CD4-positive, alpha-beta T cell (primary cell): ENCODE measurements at regions of chrX and their contacts with region 1.

Region 1: GRCh38 chrX:119943185-119943988 is at the start of gene NKAP:
- DNase-seq: peak; percentile 64 to 91 (median 72)
- ATAC-seq: peak; percentile 84
- H3K4me3 ChIP-seq: peak within 1 kb of the TSS; percentile 95
- H3K4me3 Mint-ChIP-seq: peak within 1 kb of the TSS; percentile 96
- H3K27ac ChIP-seq: peak within 1 kb of the TSS; percentile 91 to 93
- H3K27ac Mint-ChIP-seq: peak within 1 kb of the TSS; percentile 87
- H3K4me1 ChIP-seq: peaks cover 19% of the 10 kb centered on the region
- H3K4me1 Mint-ChIP-seq: peaks cover 27% of the 10 kb centered on the region
- H3K27me3 ChIP-seq: no peaks in the 10 kb centered on the region
- H3K27me3 Mint-ChIP-seq: peaks cover 2% of the 10 kb centered on the region
- CTCF ChIP-seq: no peak
- total RNA-seq, gene NKAP: 14.5 to 15.6 TPM

Region 2: DNA sequence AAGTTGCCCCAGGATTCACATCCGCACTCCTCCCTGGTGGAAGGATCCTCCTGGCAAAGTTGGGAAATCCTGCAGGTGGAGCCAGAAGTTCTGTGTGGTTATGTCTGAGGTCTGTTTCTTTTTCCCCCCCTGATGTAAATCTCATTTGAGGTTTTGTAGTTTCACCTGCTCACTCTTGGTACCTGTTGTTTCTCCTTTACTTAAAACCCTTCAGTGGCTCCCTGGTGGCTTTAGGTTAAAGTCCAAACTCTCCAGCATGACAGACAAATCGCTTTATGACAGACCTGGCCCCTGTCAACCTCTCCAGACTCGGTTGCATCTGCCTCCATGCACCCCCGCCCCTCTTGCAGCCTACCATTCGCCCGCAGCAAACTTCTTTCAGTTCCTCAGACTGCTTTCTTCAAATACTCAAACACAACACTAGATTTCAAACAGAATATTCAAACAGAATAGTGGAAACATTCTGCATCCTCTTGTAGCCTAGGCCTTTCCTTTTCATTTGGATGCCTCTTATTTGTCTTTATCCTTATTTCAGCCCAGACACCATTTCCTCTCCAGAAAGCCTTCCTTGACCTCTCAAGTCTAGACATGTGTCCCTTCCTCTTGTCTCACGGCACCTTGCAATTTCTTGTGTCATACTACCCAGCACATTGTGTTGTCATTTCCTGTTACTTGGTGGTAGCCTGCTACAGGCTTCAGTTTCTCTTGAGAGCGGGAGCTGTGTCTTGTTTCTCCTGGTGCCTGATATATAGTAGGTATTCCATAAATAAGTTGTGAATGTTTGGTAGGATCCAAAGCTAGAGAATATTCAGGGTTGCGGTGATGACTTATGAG is 1191.2 kb before region 1 on chrX:
- CTCF ChIA-PET with region 1: no interaction called
- POLR2A ChIA-PET with region 1: no interaction called
- intact Hi-C with region 1: no loop called
- DNase-seq: peak in 3 of 14 experiments; percentile 2 to 31 (median 14)
- ATAC-seq: no peak
- H3K4me3 ChIP-seq: no peak overlapping the region
- H3K4me3 Mint-ChIP-seq: no peak overlapping the region
- H3K27ac ChIP-seq: no peak overlapping the region
- H3K27ac Mint-ChIP-seq: no peak overlapping the region
- H3K4me1 ChIP-seq: no peaks in the 10 kb centered on the region
- H3K4me1 Mint-ChIP-seq: no peaks in the 10 kb centered on the region
- H3K27me3 ChIP-seq: no peaks in the 10 kb centered on the region
- H3K27me3 Mint-ChIP-seq: peaks cover 3% of the 10 kb centered on the region
- CTCF ChIP-seq: no peak

Region 3: GRCh38 chrX:119852382-119853353 is 90.7 kb before region 1 on chrX and contains the start of gene UPF3B:
- CTCF ChIA-PET with region 1: no interaction called
- POLR2A ChIA-PET with region 1: no interaction called
- intact Hi-C with region 1: loop called in 1 of 2 experiments (anchors 5 kb)
- DNase-seq: peak; percentile 82 to 98 (median 90)
- ATAC-seq: peak; percentile 98
- H3K4me3 ChIP-seq: peak within 1 kb of the TSS; percentile 95
- H3K4me3 Mint-ChIP-seq: peak within 1 kb of the TSS; percentile 99
- H3K27ac ChIP-seq: peak within 1 kb of the TSS; percentile 82 to 93
- H3K27ac Mint-ChIP-seq: peak within 1 kb of the TSS; percentile 94
- H3K4me1 ChIP-seq: peaks cover 10% of the 10 kb centered on the region
- H3K4me1 Mint-ChIP-seq: peaks cover 22% of the 10 kb centered on the region
- H3K27me3 ChIP-seq: no peaks in the 10 kb centered on the region
- H3K27me3 Mint-ChIP-seq: no peaks in the 10 kb centered on the region
- CTCF ChIP-seq: no peak
- total RNA-seq, gene UPF3B: 4.7 to 5.7 TPM

Region 4: GRCh38 chrX:120244735-120245498 is 301.5 kb after region 1 on chrX:
- CTCF ChIA-PET with region 1: no interaction called
- POLR2A ChIA-PET with region 1: no interaction called
- intact Hi-C with region 1: loop called (anchors 10 kb)
- DNase-seq: peak; percentile 34 to 80 (median 48)
- ATAC-seq: peak; percentile 83
- H3K4me3 ChIP-seq: peak overlapping the region; percentile 90
- H3K4me3 Mint-ChIP-seq: peak overlapping the region; percentile 98
- H3K27ac ChIP-seq: peak overlapping the region; percentile 14 to 66
- H3K27ac Mint-ChIP-seq: peak overlapping the region; percentile 84
- H3K4me1 ChIP-seq: peaks cover 3% of the 10 kb centered on the region
- H3K4me1 Mint-ChIP-seq: peaks cover 26% of the 10 kb centered on the region
- H3K27me3 ChIP-seq: no peaks in the 10 kb centered on the region
- H3K27me3 Mint-ChIP-seq: no peaks in the 10 kb centered on the region
- CTCF ChIP-seq: no peak

Region 5: GRCh38 chrX:120468825-120469525 is 525.6 kb after region 1 on chrX and contains the start of gene LAMP2:
- CTCF ChIA-PET with region 1: no interaction called
- POLR2A ChIA-PET with region 1: no interaction called
- intact Hi-C with region 1: no loop called
- DNase-seq: peak; percentile 61 to 90 (median 75)
- ATAC-seq: peak; percentile 96
- H3K4me3 ChIP-seq: peak within 1 kb of the TSS; percentile 82
- H3K4me3 Mint-ChIP-seq: peak within 1 kb of the TSS; percentile 93
- H3K27ac ChIP-seq: peak within 1 kb of the TSS; percentile 59 to 60
- H3K27ac Mint-ChIP-seq: peak within 1 kb of the TSS; percentile 88
- H3K4me1 ChIP-seq: peaks cover 20% of the 10 kb centered on the region
- H3K4me1 Mint-ChIP-seq: peaks cover 39% of the 10 kb centered on the region
- H3K27me3 ChIP-seq: no peaks in the 10 kb centered on the region
- H3K27me3 Mint-ChIP-seq: no peaks in the 10 kb centered on the region
- CTCF ChIP-seq: no peak
- total RNA-seq, gene LAMP2: 13.4 to 15.4 TPM